Heart right ventricle (tissue), 16 donors: ENCODE measurements at regions of chr1 and their contacts with region 1.

Region 1: GRCh38 chr1:218369688-218370511 is 24.8 kb downstream of the TGFB2 start:
- DNase-seq: no peak
- ATAC-seq: peak in 7 of 8 donors; percentile 16 to 64 (median 31)
- H3K4me3 ChIP-seq: peak overlapping the region in 1 of 10 donors; percentile 5
- H3K27ac ChIP-seq: peak overlapping the region in 8 of 10 donors; percentile 1 to 75 (median 60)
- H3K4me1 ChIP-seq: peaks cover 0 to 72% (median 51%) of the 10 kb centered on the region in 9 donors
- H3K27me3 ChIP-seq: peaks cover 0 to 5% (median 0%) of the 10 kb centered on the region in 7 donors
- CTCF ChIP-seq: no peak

Region 2: GRCh38 chr1:218299416-218299815 is 70.5 kb before region 1 on chr1:
- intact Hi-C with region 1: no loop called
- DNase-seq: no peak
- ATAC-seq: peak in 1 of 8 donors; percentile 19
- H3K4me3 ChIP-seq: no peak overlapping the region
- H3K27ac ChIP-seq: no peak overlapping the region
- H3K4me1 ChIP-seq: peaks cover 0 to 10% (median 4%) of the 10 kb centered on the region in 9 donors
- H3K27me3 ChIP-seq: no peaks in the 10 kb centered on the region
- CTCF ChIP-seq: peak in 7 of 9 donors; percentile 30 to 63 (median 46)

Region 3: DNA sequence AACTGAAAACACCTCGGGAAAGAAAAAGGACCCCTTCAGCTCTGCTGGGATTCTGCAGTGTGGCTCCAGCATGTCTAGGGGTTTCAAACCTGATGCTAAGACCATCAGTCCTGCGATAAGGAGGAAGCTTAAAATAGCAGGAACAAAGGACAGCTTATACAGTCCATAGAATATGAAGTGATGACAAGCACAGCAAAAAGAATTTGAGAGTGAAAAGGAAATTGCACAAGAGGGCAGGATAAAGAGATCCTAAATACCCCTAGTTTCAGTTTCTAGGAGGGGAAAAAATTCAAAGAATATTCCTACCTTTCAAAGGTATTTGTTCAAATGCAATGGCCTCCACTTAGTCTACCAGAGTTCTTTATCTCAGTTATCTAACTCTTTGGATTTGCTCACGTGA is 146.6 kb after region 1 on chr1:
- intact Hi-C with region 1: loop called in 1 of 10 experiments (anchors 5 kb)
- DNase-seq: no peak
- ATAC-seq: no peak
- H3K4me3 ChIP-seq: no peak overlapping the region
- H3K27ac ChIP-seq: no peak overlapping the region
- H3K4me1 ChIP-seq: peaks cover 0 to 5% (median 0%) of the 10 kb centered on the region in 9 donors
- H3K27me3 ChIP-seq: no peaks in the 10 kb centered on the region
- CTCF ChIP-seq: no peak